ENCODE measurements at regions of chr17 and their contacts with region 1.

Region 1: DNA sequence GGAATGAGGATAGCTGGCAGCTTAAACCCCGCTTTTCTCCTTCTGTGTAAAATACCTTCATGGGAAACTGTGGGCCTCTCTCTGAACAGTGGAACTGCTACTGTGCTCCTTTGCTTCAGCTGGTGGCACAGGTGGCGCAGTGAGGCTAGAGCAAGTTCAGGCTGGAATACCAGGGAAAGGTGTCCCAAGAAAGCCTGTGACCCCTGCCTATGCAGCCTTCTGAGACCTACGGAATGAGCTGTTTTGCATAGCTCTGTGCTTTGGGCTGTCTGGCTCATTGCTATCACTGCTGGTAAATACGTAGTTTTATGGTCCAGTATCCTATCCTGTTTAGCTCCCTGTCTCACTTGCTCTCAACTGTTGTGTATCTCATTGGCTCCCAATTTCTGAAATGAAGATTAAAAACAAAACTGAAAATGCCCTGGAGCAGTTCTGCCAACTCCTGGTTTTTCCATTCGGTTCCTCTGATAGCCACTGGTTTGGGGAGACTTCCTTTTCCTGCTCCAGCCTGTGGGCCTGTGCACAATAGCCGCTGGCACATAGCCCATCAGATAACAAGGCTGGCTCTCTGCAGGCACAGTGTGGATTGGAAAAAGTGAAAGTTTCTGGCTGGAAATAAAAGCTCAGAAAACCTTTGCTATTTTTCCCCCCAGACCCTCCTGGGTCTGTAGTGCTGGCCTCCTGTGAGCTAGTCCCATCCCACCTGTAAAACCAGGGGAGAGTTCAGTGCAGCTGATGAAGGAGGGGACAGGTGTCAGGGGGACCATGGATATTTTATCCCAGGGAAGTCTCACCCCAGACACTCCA is 24.1 kb downstream of the LIMD2 start:
- DNase-seq: peak in 1 of 2 experiments; percentile 40
- ATAC-seq: peak; percentile 47 to 67; a peak in 4 of 6 replicates
- H3K4me3 ChIP-seq: no peak overlapping the region
- H3K27ac ChIP-seq: no peak overlapping the region
- H3K4me1 ChIP-seq: peaks cover 9% of the 10 kb centered on the region; the same call in 2 of the 3 replicates
- CTCF ChIP-seq: no peak
- EP300 ChIP-seq: no peak
- POLR2A ChIP-seq: no peak
- RAD21 ChIP-seq: no peak

Region 2: DNA sequence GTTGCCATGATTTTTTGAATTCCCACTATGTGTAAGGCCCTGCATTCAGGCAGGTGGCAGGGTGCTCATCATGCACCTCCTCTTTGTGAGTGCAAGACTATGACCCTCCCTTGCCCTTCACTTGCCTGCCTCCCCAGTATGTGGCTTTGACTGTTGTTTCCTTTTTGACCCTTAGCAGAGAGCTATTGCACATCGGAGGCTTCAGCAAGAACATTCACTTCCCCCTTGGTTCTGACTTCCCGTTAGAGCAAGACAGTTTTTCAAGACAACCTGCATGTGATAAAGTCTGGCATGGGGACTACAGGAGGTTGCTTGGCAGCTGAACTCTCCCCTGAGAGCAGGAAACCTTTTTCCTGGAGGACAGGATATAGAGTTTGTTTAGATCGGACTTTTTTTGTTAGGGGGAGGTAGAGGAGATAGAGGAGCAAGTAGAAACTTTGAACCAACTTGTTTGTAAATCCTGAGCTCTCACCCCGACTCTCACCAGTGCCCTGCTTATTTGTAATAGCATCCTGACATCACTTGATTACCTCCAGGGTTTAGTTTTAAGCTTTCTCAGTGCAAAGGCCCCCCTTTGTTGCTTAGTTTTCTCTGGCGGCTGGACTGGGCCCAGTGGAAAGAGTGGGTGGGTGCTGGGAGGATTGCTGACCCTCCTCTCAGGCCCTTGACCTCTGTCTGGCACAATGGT is 10.1 kb before region 1 on chr17:
- CTCF ChIA-PET with region 1: interaction called, 12 read pairs
- POLR2A ChIA-PET with region 1: no interaction called
- DNase-seq: no peak
- ATAC-seq: no peak
- H3K4me3 ChIP-seq: no peak overlapping the region
- H3K27ac ChIP-seq: no peak overlapping the region
- H3K4me1 ChIP-seq: no peaks in the 10 kb centered on the region
- CTCF ChIP-seq: no peak
- EP300 ChIP-seq: no peak
- POLR2A ChIP-seq: no peak
- RAD21 ChIP-seq: no peak

Region 3: DNA sequence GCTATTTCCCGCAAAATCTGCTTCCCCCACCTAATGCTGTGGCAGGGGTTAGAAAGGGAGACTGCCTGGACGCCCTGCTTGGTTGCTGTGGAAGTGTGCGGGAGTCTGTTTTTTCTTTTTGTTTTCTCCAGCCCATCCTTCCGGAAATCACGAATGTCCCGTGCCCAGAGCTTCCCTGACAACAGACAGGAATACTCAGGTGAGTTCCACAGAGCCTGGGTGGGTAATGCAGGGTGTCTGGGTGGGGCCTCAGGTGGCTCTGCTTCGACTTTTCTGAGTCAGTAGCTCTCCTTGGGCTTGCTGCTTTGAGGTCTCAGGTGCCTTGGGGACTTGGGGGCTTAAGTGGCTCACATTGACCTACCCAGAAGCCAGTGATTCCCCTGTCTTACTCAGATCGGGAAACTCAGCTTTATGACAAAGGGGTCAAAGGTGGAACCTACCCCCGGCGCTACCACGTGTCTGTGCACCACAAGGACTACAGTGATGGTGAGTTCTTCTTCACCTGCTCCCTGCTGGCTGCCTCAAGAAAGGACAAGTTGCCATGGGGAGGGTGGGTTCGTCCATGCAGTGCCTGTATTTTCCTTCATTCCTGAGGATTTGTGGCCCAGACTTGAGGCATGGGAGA is 12.7 kb after region 1 on chr17:
- CTCF ChIA-PET with region 1: interaction called, 116 read pairs
- POLR2A ChIA-PET with region 1: no interaction called
- DNase-seq: no peak
- ATAC-seq: peak in 1 of 2 experiments; percentile 17; a peak in 1 of 6 replicates
- H3K4me3 ChIP-seq: no peak overlapping the region
- H3K27ac ChIP-seq: no peak overlapping the region
- H3K4me1 ChIP-seq: no peaks in the 10 kb centered on the region
- CTCF ChIP-seq: no peak
- EP300 ChIP-seq: no peak
- POLR2A ChIP-seq: no peak
- RAD21 ChIP-seq: no peak

Region 4: GRCh38 chr17:63697341-63698286 is 21.8 kb after region 1 on chr17:
- CTCF ChIA-PET with region 1: interaction called, 116 read pairs
- POLR2A ChIA-PET with region 1: no interaction called
- DNase-seq: peak; percentile 69 to 78
- ATAC-seq: peak; percentile 31 to 69
- H3K4me3 ChIP-seq: no peak overlapping the region
- H3K27ac ChIP-seq: no peak overlapping the region
- H3K4me1 ChIP-seq: 0 out of 3 replicates have a peak, but pooled peaks cover 6% of the 10 kb centered on the region
- CTCF ChIP-seq: peak; percentile 56
- EP300 ChIP-seq: no peak
- POLR2A ChIP-seq: no peak
- RAD21 ChIP-seq: peak; percentile 31 to 40; a peak in 4 of 5 replicates

Region 5: DNA sequence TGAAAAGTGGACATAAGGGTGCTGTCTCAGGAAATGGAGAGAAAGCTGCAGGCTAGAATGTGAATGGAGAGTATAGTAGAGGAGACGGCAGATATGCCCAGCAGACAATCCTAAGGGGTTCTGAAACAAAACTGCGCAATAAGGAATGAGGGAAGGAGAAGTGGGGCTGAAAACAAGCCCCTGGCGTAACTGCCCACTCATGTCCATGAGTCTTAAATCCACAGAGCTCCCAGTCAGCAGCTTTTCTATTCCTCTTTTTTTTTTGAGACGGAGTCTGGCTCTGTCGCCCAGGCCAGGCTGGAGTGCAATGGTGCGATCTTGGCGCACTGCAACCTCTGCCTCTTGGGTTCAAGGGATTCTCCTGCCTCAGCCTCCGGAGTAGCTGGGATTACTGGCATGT is 59.9 kb after region 1 on chr17:
- CTCF ChIA-PET with region 1: no interaction called
- POLR2A ChIA-PET with region 1: no interaction called
- DNase-seq: no peak
- ATAC-seq: no peak
- H3K4me3 ChIP-seq: no peak overlapping the region
- H3K27ac ChIP-seq: no peak overlapping the region
- H3K4me1 ChIP-seq: peaks cover 9% of the 10 kb centered on the region; the same call in 2 of the 3 replicates
- CTCF ChIP-seq: no peak
- EP300 ChIP-seq: no peak
- POLR2A ChIP-seq: no peak
- RAD21 ChIP-seq: no peak

Measured in A549 (cell line).